Endothelial cell of umbilical vein (primary cell): ENCODE measurements at regions of chr6 and their contacts with region 1.

Region 1: GRCh38 chr6:121430514-121431460 is 4.7 kb upstream of the GJA1 start:
- DNase-seq: peak; percentile 77
- H3K4me3 ChIP-seq: no peak overlapping the region
- H3K27ac ChIP-seq: no peak overlapping the region
- H3K4me1 ChIP-seq: peaks cover 13% of the 10 kb centered on the region
- H3K27me3 ChIP-seq: no peaks in the 10 kb centered on the region
- CTCF ChIP-seq: peak; percentile 47 to 49
- POLR2A ChIP-seq: no peak

Region 2: GRCh38 chr6:121418346-121418745 is 12.4 kb before region 1 on chr6:
- CTCF ChIA-PET with region 1: no interaction called
- POLR2A ChIA-PET with region 1: no interaction called
- dilution Hi-C with region 1: no loop called
- intact Hi-C with region 1: no loop called
- DNase-seq: no peak
- H3K4me3 ChIP-seq: no peak overlapping the region
- H3K27ac ChIP-seq: no peak overlapping the region
- H3K4me1 ChIP-seq: no peaks in the 10 kb centered on the region
- H3K27me3 ChIP-seq: no peaks in the 10 kb centered on the region
- CTCF ChIP-seq: no peak
- POLR2A ChIP-seq: no peak

Region 3: GRCh38 chr6:121666814-121667213 is 236.0 kb after region 1 on chr6:
- CTCF ChIA-PET with region 1: no interaction called
- POLR2A ChIA-PET with region 1: no interaction called
- dilution Hi-C with region 1: loop called (anchors 10 kb)
- intact Hi-C with region 1: no loop called
- DNase-seq: peak; percentile 96
- H3K4me3 ChIP-seq: no peak overlapping the region
- H3K27ac ChIP-seq: no peak overlapping the region
- H3K4me1 ChIP-seq: peaks cover 14% of the 10 kb centered on the region
- H3K27me3 ChIP-seq: no peaks in the 10 kb centered on the region
- CTCF ChIP-seq: no peak
- POLR2A ChIP-seq: no peak

Region 4: DNA sequence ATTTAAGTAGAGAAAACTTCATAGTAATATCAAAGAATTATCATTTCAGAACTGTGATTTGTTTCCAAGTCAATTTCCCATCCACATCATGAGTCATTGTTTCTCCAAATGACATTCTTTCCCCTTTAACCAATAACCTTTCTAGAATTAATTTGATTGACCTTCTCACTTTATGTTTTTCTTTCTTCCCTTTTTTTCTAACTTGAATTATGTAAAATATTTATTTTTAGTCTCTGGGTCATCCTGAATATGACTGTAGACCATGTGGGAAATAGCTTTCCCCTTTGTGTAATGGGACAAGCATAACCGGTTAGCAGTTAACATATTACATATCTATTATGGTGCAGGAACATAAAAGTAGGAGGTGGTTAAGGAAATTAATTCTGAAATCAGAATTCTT is 295.8 kb after region 1 on chr6:
- CTCF ChIA-PET with region 1: interaction called, 3 read pairs
- POLR2A ChIA-PET with region 1: no interaction called
- dilution Hi-C with region 1: no loop called
- intact Hi-C with region 1: loop called (anchors 10 kb)
- DNase-seq: peak; percentile 83
- H3K4me3 ChIP-seq: no peak overlapping the region
- H3K27ac ChIP-seq: peak overlapping the region; percentile 29
- H3K4me1 ChIP-seq: peaks cover 10% of the 10 kb centered on the region
- H3K27me3 ChIP-seq: no peaks in the 10 kb centered on the region
- CTCF ChIP-seq: no peak
- POLR2A ChIP-seq: no peak

Region 5: DNA sequence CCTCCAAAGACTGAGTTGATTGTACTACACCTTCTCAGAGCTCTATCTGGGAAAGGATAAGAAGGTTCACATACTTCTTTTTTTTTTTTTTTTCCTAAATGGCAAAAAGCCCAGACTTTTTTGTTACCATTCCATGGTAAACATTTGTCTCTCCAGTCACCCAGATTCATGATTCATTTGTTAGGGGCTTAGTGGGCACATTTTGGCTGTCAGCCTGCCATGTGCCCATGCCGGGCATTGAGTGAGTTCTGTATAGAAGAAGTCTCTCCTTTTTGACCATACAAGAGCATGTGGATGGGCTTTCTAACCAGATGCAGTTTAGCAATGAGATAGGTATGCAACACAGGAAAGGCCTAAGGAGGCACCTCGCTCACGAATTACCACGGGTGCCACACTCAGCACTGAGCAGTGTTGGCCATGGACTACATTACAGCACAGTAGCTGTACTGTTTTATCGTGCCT is 521.2 kb after region 1 on chr6:
- CTCF ChIA-PET with region 1: no interaction called
- POLR2A ChIA-PET with region 1: no interaction called
- dilution Hi-C with region 1: no loop called
- intact Hi-C with region 1: loop called (anchors 10 kb)
- DNase-seq: peak; percentile 85
- H3K4me3 ChIP-seq: no peak overlapping the region
- H3K27ac ChIP-seq: no peak overlapping the region
- H3K4me1 ChIP-seq: peaks cover 9% of the 10 kb centered on the region
- H3K27me3 ChIP-seq: no peaks in the 10 kb centered on the region
- CTCF ChIP-seq: no peak
- POLR2A ChIP-seq: no peak

Region 6: DNA sequence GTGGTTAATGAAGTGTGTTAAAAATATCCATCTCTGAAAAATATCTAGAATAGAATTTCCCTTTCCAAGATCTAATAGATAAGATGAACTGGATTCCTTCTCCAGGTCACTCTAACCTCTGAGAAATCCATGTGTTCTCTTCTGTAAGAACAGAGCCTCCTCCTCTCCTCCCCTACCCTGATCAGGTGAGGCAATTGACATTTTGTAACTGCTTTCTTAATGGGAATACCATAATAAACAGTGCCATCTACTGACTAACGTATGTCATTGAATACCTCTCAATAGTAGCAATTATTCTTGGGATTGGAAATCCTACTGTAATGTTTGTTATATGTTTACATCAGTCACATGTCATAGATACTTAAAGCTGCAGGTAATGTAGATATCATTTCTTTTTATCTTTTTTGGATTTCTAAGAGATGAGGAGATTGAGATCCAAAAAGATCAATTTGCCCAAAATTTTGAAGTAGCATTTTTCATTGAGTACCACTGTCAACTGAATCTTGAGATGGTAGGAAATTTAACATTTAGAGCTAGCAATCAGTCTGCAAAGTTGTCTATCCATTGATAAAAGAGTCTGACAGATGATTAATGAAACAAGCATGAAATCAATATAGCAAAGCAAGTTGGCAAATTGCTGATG is 602.9 kb after region 1 on chr6:
- CTCF ChIA-PET with region 1: interaction called, 19 read pairs
- POLR2A ChIA-PET with region 1: no interaction called
- dilution Hi-C with region 1: no loop called
- intact Hi-C with region 1: loop called (anchors 1 kb)
- DNase-seq: peak; percentile 69
- H3K4me3 ChIP-seq: no peak overlapping the region
- H3K27ac ChIP-seq: no peak overlapping the region
- H3K4me1 ChIP-seq: no peaks in the 10 kb centered on the region
- H3K27me3 ChIP-seq: no peaks in the 10 kb centered on the region
- CTCF ChIP-seq: peak; percentile 35 to 51
- POLR2A ChIP-seq: no peak

Region 7: GRCh38 chr6:122184401-122184827 is 753.6 kb after region 1 on chr6:
- CTCF ChIA-PET with region 1: interaction called, 19 read pairs
- POLR2A ChIA-PET with region 1: no interaction called
- dilution Hi-C with region 1: no loop called
- intact Hi-C with region 1: no loop called
- DNase-seq: peak; percentile 32
- H3K4me3 ChIP-seq: no peak overlapping the region
- H3K27ac ChIP-seq: no peak overlapping the region
- H3K4me1 ChIP-seq: no peaks in the 10 kb centered on the region
- H3K27me3 ChIP-seq: no peaks in the 10 kb centered on the region
- CTCF ChIP-seq: peak in 1 of 2 donors; percentile 15
- POLR2A ChIP-seq: no peak

Region 8: GRCh38 chr6:122530440-122531046 is 1099.8 kb after region 1 on chr6:
- CTCF ChIA-PET with region 1: interaction called, 4 read pairs
- POLR2A ChIA-PET with region 1: no interaction called
- dilution Hi-C with region 1: no loop called
- intact Hi-C with region 1: loop called (anchors 10 kb)
- DNase-seq: peak; percentile 76
- H3K4me3 ChIP-seq: no peak overlapping the region
- H3K27ac ChIP-seq: no peak overlapping the region
- H3K4me1 ChIP-seq: no peaks in the 10 kb centered on the region
- H3K27me3 ChIP-seq: peaks cover 1 to 3% of the 10 kb centered on the region in 2 experiments
- CTCF ChIP-seq: peak; percentile 67 to 82
- POLR2A ChIP-seq: no peak